ENCODE measurements at regions of chr5 and their contacts with region 1.

Region 1: GRCh38 chr5:132500931-132501630 is 10.5 kb upstream of the IRF1 start:
- DNase-seq: peak; percentile 89
- H3K4me3 ChIP-seq: no peak overlapping the region
- H3K27ac ChIP-seq: no peak overlapping the region
- H3K4me1 ChIP-seq: peaks cover 37% of the 10 kb centered on the region
- CTCF ChIP-seq: peak; percentile 99

Region 2: DNA sequence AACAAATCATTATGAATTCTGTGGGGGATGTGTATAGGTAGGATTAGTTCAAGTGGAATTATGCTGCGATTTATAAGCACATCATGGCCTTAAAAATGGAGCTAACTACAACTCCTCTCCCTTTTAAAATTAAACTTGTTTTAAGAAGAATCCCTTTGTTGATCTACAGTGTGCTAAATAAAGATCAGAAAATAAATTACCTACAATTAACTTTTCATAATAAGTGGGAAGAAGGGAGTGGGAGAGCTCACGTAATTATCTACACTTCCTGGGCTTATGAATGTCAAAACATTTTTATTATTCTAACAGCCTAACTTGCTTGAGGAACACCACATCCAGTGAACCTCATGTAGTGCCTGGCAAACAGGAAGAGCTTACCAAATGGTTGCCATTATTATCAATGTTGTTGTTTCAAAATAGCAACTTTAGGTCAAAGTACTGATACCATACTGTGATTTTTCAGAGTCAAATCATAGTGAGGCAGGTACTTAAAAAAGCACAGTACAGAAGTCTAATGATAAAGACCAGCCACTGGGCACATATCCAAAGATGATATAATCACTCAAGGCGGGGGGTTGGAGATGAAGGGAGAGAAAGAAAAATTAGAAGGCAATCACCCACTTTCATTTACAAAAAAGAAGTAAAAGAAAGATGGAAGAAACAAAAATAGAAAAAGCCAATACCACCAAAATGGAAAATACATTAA is 1040.1 kb before region 1 on chr5:
- CTCF ChIA-PET with region 1: no interaction called
- POLR2A ChIA-PET with region 1: no interaction called
- intact Hi-C with region 1: no loop called
- DNase-seq: no peak
- H3K4me3 ChIP-seq: no peak overlapping the region
- H3K27ac ChIP-seq: no peak overlapping the region
- H3K4me1 ChIP-seq: no peaks in the 10 kb centered on the region
- CTCF ChIP-seq: no peak

Region 3: GRCh38 chr5:132272311-132273210 is 228.5 kb before region 1 on chr5:
- CTCF ChIA-PET with region 1: interaction called, 3 read pairs
- POLR2A ChIA-PET with region 1: no interaction called
- intact Hi-C with region 1: loop called (anchors 5 kb)
- DNase-seq: peak; percentile 57
- H3K4me3 ChIP-seq: no peak overlapping the region
- H3K27ac ChIP-seq: no peak overlapping the region
- H3K4me1 ChIP-seq: no peaks in the 10 kb centered on the region
- CTCF ChIP-seq: peak; percentile 92

Region 4: DNA sequence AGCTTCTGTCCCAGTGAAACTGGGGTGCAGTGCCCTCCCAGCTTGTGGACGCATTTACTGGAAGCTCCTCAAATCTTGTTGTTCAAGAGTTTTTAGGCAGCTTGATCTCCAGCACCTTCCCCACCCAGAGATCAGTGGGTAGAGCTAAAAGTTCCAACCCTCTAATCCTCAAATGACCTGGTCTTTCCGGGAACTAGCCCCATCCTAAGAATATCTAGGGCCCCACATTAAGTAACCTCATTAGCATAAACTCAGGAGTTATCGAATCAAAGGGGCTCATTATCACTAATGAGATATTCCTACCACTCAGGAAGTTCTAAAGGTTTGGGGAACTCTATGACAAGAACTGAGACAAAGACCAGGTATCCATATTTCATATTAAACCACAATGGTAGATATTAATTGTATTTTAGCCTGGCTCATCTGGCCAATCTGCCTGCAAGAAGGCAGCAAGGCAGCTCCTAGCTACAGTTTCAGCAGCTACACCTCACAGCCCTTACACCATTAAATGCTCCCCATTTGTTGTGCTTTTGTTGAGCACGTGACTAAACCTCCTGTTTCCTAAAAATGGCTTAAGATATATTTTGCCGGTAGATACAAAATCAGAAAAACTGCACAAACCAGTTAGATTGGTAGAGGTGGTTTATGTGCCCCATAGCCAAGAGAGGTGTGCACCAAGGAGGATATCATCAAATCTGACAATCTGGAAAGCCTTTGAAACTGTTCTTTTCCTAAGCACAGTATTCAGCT is 156.1 kb before region 1 on chr5:
- CTCF ChIA-PET with region 1: no interaction called
- POLR2A ChIA-PET with region 1: no interaction called
- intact Hi-C with region 1: no loop called
- DNase-seq: no peak
- H3K4me3 ChIP-seq: no peak overlapping the region
- H3K27ac ChIP-seq: no peak overlapping the region
- H3K4me1 ChIP-seq: no peaks in the 10 kb centered on the region
- CTCF ChIP-seq: no peak

Region 5: GRCh38 chr5:132419502-132420468 is 81.3 kb before region 1 on chr5:
- CTCF ChIA-PET with region 1: interaction called, 5 read pairs
- POLR2A ChIA-PET with region 1: interaction called, 20 read pairs
- intact Hi-C with region 1: loop called (anchors 1 kb)
- DNase-seq: peak; percentile 82
- H3K4me3 ChIP-seq: peak overlapping the region; percentile 62
- H3K27ac ChIP-seq: peak overlapping the region; percentile 96
- H3K4me1 ChIP-seq: peaks cover 84% of the 10 kb centered on the region
- CTCF ChIP-seq: peak; percentile 95

Region 6: GRCh38 chr5:132540764-132541163 is 39.7 kb after region 1 on chr5:
- CTCF ChIA-PET with region 1: no interaction called
- POLR2A ChIA-PET with region 1: no interaction called
- intact Hi-C with region 1: no loop called
- DNase-seq: no peak
- H3K4me3 ChIP-seq: no peak overlapping the region
- H3K27ac ChIP-seq: no peak overlapping the region
- H3K4me1 ChIP-seq: no peaks in the 10 kb centered on the region
- CTCF ChIP-seq: no peak

Region 7: DNA sequence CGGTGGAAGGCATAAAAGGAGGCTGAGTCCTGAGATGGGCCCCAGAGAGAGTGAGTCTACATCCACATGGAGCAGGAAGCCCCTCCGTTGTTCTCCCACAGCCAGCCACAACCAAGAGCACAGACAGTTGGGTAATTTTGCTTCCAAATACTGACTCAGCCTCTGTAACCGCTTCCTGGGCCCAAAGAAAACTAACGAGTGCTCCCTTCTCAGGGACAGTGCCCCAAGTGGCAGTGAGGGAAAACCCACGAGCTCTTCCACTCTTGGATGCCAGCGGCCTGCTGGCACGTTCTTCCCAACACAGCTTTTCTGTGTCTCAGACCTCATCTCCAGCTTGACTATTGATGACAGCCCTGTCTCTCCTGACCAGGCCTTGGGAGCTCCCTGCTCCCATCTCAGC is 903.6 kb after region 1 on chr5:
- CTCF ChIA-PET with region 1: no interaction called
- POLR2A ChIA-PET with region 1: no interaction called
- intact Hi-C with region 1: no loop called
- DNase-seq: no peak
- H3K4me3 ChIP-seq: no peak overlapping the region
- H3K27ac ChIP-seq: no peak overlapping the region
- H3K4me1 ChIP-seq: no peaks in the 10 kb centered on the region
- CTCF ChIP-seq: peak; percentile 37

Measured in OCI-LY7 (cell line).